ENCODE measurements at regions of chr1 and their contacts with region 1.

Region 1: GRCh38 chr1:92994105-92994712 is 32.9 kb upstream of the DIPK1A start:
- DNase-seq: peak; percentile 68 to 91 (median 70)
- ATAC-seq: peak; percentile 82
- H3K4me3 ChIP-seq: no peak overlapping the region
- H3K27ac ChIP-seq: no peak overlapping the region; the same call in 2 of the 3 replicates
- H3K4me1 ChIP-seq: peaks cover 0 to 34% of the 10 kb centered on the region in 2 experiments; a peak in 3 of 5 replicates
- H3K27me3 ChIP-seq: no peaks in the 10 kb centered on the region
- CTCF ChIP-seq: peak; percentile 78 to 91 (median 90)
- EP300 ChIP-seq: no peak
- POLR2A ChIP-seq: no peak
- RAD21 ChIP-seq: peak; percentile 98 to 99

Region 2: GRCh38 chr1:92858564-92859399 is 135.4 kb before region 1 on chr1:
- CTCF ChIA-PET with region 1: interaction called, 125 read pairs
- POLR2A ChIA-PET with region 1: interaction called, 4 read pairs
- in situ Hi-C with region 1: loop called (anchors 5 kb)
- intact Hi-C with region 1: loop called (anchors 1 kb)
- DNase-seq: peak; percentile 72 to 83 (median 75)
- ATAC-seq: peak; percentile 85
- H3K4me3 ChIP-seq: no peak overlapping the region
- H3K27ac ChIP-seq: no peak overlapping the region
- H3K4me1 ChIP-seq: peaks cover 0 to 7% of the 10 kb centered on the region in 2 experiments; a peak in 1 of 5 replicates
- H3K27me3 ChIP-seq: no peaks in the 10 kb centered on the region
- CTCF ChIP-seq: peak; percentile 93 to 99 (median 98)
- EP300 ChIP-seq: no peak
- POLR2A ChIP-seq: no peak
- RAD21 ChIP-seq: peak; percentile 100

Region 3: GRCh38 chr1:92951141-92951582 is 43.0 kb before region 1 on chr1:
- CTCF ChIA-PET with region 1: no interaction called
- POLR2A ChIA-PET with region 1: no interaction called
- in situ Hi-C with region 1: no loop called
- intact Hi-C with region 1: loop called (anchors 5 kb)
- DNase-seq: peak in 2 of 4 experiments; percentile 49 to 67
- ATAC-seq: peak; percentile 86
- H3K4me3 ChIP-seq: no peak overlapping the region
- H3K27ac ChIP-seq: peak overlapping the region; percentile 23; the same call in 2 of the 3 replicates
- H3K4me1 ChIP-seq: peaks cover 6 to 28% of the 10 kb centered on the region in 2 experiments; a peak in 4 of 5 replicates
- H3K27me3 ChIP-seq: no peaks in the 10 kb centered on the region
- CTCF ChIP-seq: peak in 2 of 3 experiments; percentile 36 to 38; a peak in 4 of 6 replicates
- EP300 ChIP-seq: no peak; the same call in 1 of the 2 replicates
- POLR2A ChIP-seq: no peak
- RAD21 ChIP-seq: peak in 1 of 2 experiments; percentile 46; a peak in 2 of 4 replicates

Region 4: DNA sequence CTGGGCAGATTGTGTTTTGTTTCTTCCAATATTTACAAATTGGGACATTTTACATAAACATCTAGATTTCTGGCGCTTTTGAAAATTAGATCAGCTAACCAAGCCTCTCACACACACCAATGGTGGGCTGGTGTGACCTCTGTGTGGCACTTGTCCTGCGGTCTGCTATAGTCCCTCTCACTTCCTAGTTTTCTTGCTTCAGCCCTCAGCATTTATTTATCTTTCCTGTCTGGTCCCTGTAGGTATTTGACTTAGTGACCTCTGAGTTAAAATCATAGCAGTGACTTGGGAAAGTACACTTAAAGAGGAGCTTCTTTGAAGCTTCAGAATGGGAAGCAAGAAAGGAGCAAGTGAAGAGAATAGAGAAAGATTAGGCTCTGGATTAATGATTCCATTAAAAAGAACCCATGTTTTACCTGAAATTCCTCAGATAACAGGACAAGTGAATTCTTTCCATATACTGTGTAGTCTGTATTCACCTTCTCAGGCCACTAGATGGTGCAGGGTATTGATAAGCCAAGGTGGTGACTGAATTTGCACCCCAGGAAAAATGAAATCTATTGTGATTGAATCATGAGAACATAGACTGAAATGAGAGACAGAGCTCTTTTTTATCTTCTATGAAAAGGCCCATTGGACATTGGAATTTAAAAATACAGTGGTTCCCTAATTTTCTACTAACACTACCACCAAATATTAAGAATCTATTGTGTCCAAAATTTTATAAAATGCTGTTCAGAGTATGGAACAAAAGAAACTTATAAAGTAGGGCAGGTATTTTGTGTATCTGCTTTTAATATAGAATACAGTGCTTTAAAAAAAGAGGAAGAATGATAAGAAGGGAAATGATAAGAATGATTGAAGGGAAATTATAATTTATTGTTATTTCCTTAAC is 25.8 kb before region 1 on chr1:
- CTCF ChIA-PET with region 1: interaction called, 13 read pairs
- POLR2A ChIA-PET with region 1: no interaction called
- in situ Hi-C with region 1: loop called (anchors 5 kb)
- intact Hi-C with region 1: loop called (anchors 1 kb)
- DNase-seq: peak in 2 of 4 experiments; percentile 29 to 38
- ATAC-seq: peak; percentile 64
- H3K4me3 ChIP-seq: no peak overlapping the region
- H3K27ac ChIP-seq: no peak overlapping the region
- H3K4me1 ChIP-seq: peaks cover 5 to 30% of the 10 kb centered on the region in 2 experiments
- H3K27me3 ChIP-seq: no peaks in the 10 kb centered on the region
- CTCF ChIP-seq: peak; percentile 27 to 59 (median 55); a peak in 5 of 6 replicates
- EP300 ChIP-seq: 0 out of 2 replicates have a peak, but pooled peaks have one; percentile 8
- POLR2A ChIP-seq: no peak
- RAD21 ChIP-seq: peak; percentile 47 to 74